Panc1 (cell line): ENCODE measurements at regions of chr16 and their contacts with region 1.

Region 1: GRCh38 chr16:58661199-58661830 is 23.3 kb downstream of the SLC38A7 start:
- DNase-seq: peak; percentile 65
- ATAC-seq: peak; percentile 95
- H3K4me3 ChIP-seq: no peak overlapping the region
- H3K27ac ChIP-seq: no peak overlapping the region
- H3K4me1 ChIP-seq: no peaks in the 10 kb centered on the region
- H3K27me3 ChIP-seq: no peaks in the 10 kb centered on the region
- CTCF ChIP-seq: peak; percentile 76

Region 2: DNA sequence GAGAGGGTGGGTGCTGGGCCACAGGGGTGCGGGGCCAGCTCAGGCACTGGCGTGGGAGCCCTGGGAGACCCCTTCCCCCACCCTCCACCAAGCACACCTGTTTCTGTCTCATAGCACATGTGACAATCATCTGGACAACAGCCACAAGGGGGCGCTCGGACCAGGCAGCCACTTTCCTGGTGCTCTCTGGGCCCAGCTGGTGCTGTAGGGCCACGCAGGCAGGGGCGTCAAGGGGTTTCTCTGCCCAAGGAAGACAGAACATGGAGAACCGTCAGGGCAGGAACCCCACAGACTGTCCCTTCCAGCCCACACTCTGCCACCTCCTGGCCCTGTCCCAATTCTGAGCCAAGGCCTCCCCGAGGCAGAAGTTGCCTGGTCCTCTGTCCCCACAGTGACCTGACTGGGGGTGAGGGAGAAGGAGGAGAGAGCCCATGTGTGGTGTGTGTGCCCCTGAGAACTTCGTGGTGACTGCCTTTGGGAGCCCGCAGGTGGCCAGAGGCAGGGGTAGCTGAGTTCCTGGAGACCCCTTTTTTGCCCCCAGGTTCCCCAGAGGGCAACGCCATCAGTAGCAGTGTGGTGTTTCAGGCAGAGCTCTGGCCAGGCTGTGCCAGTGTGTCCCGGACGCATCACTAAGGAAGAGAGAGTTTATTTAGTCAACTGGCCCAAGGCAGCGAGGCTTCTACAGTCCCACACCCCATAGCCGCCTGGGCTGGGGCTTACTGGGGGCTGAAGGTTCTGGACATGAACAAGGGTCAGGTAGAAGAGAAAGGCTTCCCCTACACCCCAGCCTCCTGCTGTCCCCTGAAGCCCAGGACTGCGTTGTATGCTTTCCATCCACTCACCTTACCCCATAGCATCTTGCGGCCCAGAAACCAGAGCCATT is 149.1 kb before region 1 on chr16:
- CTCF ChIA-PET with region 1: interaction called, 8 read pairs
- POLR2A ChIA-PET with region 1: no interaction called
- in situ Hi-C with region 1: no loop called
- intact Hi-C with region 1: loop called (anchors 5 kb)
- DNase-seq: no peak
- ATAC-seq: peak; percentile 44
- H3K4me3 ChIP-seq: no peak overlapping the region
- H3K27ac ChIP-seq: no peak overlapping the region
- H3K4me1 ChIP-seq: peaks cover 6% of the 10 kb centered on the region; the same call in 1 of the 2 replicates
- H3K27me3 ChIP-seq: no peaks in the 10 kb centered on the region
- CTCF ChIP-seq: peak; percentile 90